ENCODE measurements at regions of chr5 and their contacts with region 1.

Region 1: DNA sequence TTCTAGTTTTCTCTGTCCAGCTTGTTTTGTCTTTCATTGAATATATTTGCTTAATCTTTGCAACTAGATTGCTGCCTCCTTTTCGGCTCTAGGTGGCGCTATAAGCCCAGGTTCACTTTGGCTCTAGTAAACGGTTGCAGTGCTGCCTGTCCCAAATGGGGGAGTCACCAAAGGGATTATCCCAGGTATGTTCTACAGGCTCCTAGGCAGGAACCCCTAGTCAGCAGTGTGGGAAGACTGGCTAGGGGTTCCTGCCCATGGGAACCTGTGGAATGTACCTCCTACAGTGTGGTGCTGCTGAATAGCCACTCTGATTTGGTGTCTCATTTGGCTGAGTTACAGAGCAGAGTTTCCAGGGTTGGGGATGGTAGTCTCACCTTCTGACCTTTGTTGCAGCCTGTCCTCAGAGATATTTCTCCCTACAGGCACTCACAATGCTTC is 85.2 kb downstream of the ARSB start:
- DNase-seq: peak in 1 of 2 donors; percentile 43
- ATAC-seq: no peak
- H3K4me3 ChIP-seq: no peak overlapping the region
- H3K27ac ChIP-seq: no peak overlapping the region
- H3K4me1 ChIP-seq: peaks cover 0 to 11% (median 2%) of the 10 kb centered on the region in 9 donors
- H3K27me3 ChIP-seq: no peaks in the 10 kb centered on the region
- CTCF ChIP-seq: peak; percentile 34 to 75 (median 61)

Region 2: GRCh38 chr5:78953092-78953800 is 53.3 kb after region 1 on chr5:
- intact Hi-C with region 1: loop called in 3 of 10 experiments (anchors 10 kb)
- DNase-seq: no peak
- ATAC-seq: no peak
- H3K4me3 ChIP-seq: no peak overlapping the region
- H3K27ac ChIP-seq: no peak overlapping the region
- H3K4me1 ChIP-seq: no peaks in the 10 kb centered on the region
- H3K27me3 ChIP-seq: no peaks in the 10 kb centered on the region
- CTCF ChIP-seq: no peak

Region 3: DNA sequence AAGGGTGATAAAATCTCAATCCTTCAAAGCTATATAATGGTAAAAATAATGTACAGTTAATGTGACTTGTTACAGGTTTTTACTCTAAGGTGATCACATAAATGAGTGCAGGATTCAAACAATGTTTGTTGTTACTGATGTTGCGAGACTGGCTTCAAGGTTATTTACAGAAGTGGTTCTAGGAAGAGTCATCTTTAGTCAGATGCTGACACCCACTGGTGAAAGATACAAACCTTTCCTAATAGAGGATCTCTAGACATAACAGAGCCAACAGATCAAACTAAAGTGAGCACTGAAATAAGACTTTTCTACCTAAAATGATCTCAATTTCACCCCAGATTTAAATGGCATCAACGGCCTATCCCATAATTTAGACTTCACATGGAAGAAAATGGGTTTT is 64.9 kb after region 1 on chr5:
- intact Hi-C with region 1: loop called in 6 of 10 experiments (anchors 2 to 10 kb)
- DNase-seq: peak in 1 of 2 donors; percentile 41
- ATAC-seq: peak; percentile 69 to 90 (median 81)
- H3K4me3 ChIP-seq: no peak overlapping the region
- H3K27ac ChIP-seq: no peak overlapping the region
- H3K4me1 ChIP-seq: no peaks in the 10 kb centered on the region
- H3K27me3 ChIP-seq: no peaks in the 10 kb centered on the region
- CTCF ChIP-seq: peak; percentile 8 to 76 (median 55)

Region 4: DNA sequence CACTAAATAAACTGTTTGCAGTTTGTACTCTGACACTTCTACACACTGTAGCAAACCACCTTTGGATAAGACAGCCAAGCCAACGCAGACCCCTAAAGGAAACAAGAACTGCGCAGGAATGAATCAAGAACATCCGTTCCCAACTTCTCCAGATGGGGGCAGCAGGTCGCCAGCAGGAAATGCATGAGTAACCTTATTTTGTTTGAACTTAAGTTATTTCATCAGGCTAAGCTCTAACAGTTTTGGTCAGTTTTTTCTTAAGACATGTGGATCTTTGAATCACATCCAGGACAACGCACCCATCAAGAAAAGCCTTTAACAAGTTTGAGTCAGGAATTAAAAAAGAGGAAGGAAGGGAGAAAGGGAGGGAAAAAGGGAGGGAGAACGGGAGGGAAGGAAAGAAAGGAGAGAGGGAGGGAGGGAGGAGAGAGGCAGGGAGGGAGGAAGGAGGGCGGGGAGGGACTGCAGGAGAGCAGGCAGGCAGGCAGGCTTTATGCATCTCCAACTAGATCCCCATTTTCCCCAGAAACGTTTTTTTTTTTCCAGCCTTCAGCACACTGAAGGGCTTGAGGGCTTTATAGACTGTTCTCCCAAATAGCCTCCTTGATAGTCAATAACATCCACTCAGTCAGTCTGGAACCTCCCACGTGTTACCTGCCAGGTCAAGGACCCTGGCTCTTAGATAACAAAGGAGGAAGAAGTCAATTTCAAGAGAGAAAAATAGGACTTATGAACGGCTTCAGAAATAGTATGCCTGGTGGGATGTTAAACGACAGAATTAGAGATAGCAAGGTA is 233.9 kb after region 1 on chr5:
- intact Hi-C with region 1: loop called in 1 of 10 experiments (anchors 10 kb)
- DNase-seq: peak; percentile 34 to 60
- ATAC-seq: peak; percentile 34 to 82 (median 70)
- H3K4me3 ChIP-seq: peak overlapping the region in 8 of 10 donors; percentile 19 to 49 (median 34)
- H3K27ac ChIP-seq: peak overlapping the region in 5 of 10 donors; percentile 5 to 60 (median 31)
- H3K4me1 ChIP-seq: peaks cover 0 to 13% (median 9%) of the 10 kb centered on the region in 9 donors
- H3K27me3 ChIP-seq: no peaks in the 10 kb centered on the region
- CTCF ChIP-seq: peak; percentile 59 to 77 (median 68)